Activated CD4-positive, alpha-beta T cell treated with anti-CD3 and anti-CD28 coated beads, Interleukin-2, amount 10 ng/mL, durations not matched to agents 24 days and 14 days (primary cell): ENCODE measurements at regions of chr11 and their contacts with region 1.

Region 1: GRCh38 chr11:102416976-102417375 is 35.6 kb downstream of the TMEM123 start:
- DNase-seq: no peak
- H3K4me3 Mint-ChIP-seq: peak overlapping the region; percentile 53
- H3K27ac Mint-ChIP-seq: peak overlapping the region; percentile 80
- H3K4me1 Mint-ChIP-seq: peaks cover 73% of the 10 kb centered on the region
- H3K27me3 Mint-ChIP-seq: no peaks in the 10 kb centered on the region

Region 2: DNA sequence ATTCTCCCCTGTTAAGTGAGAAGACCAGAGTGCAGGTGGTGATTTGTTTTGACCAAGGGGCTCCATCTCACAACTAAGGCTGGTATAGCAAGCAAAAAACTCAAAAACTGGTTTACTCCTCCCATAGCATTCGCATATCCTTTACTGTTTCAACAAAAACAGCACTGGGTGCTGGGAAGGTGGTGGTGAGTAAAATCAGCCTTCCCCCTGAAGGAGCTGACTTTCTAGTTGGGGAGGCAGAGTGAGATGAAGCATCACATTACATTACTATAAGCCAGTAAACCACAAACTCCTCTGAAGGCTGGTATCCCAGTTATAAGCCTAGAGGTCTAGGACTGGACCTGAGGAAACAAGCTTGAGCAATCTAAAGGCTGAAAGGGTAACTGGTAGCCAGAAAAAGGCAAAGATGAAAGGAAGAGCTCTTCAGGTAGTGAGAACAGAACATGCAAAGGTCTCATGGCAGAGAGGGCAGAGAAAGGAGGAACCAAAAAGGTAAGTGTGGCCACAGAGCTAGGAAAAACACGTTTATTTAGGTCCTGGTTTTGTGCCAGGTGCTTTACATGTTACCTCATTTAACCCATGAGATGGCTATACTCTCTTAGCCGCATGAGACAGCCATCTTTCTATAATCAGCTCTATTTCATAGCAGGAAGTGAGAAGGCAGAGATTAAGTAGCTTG is 13.3 kb after region 1 on chr11:
- intact Hi-C with region 1: loop called (anchors 1 kb)
- DNase-seq: no peak
- H3K4me3 Mint-ChIP-seq: peak overlapping the region; percentile 38
- H3K27ac Mint-ChIP-seq: peak overlapping the region; percentile 87
- H3K4me1 Mint-ChIP-seq: peaks cover 52% of the 10 kb centered on the region
- H3K27me3 Mint-ChIP-seq: no peaks in the 10 kb centered on the region